Body of pancreas (tissue), 4 donors: ENCODE measurements at regions of chr1 and their contacts with region 1.

Region 1: DNA sequence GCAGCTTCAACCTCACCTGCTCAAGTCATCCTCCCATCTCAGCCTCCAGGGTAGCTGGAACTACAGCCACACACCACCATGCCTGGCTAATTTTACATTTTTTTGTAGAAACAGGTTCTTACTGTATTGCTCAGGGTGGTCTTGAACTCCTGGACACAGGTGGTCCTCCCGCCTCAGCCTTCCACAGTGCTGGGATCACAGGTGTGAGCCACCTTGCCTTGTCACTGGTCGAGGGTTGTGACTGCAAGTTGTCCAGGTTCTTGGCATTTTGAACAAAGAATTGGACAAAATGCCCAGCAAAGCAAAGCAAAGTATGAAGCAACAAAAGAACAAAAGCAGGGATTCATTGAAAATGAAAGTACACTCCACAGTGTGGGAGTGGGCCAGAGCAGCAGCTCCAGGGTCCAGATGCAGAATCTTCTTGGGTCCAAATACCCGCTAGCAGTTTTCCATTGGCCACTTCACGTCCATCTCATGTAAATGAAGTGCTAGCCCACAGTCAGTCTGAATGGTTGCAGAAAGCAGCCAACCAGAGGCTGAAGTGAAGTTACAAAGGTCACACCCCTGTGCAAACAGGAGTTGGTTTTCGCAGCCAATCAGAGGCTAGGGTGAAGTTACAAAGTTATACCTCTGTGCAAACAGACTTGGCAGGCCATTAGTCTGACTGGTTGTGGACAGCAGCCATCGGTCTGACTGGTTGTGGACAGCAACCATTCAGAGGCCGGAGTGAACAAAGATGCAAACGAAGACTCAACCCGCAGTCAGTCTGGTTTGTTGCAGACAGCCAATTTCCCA is 109.5 kb upstream of the KIF26B start:
- DNase-seq: peak; percentile 56 to 82 (median 64)
- ATAC-seq: peak; percentile 60
- H3K4me3 ChIP-seq: no peak overlapping the region
- H3K27ac ChIP-seq: peak overlapping the region; percentile 44 to 79 (median 68)
- H3K4me1 ChIP-seq: peaks cover 27% of the 10 kb centered on the region
- H3K27me3 ChIP-seq: no peaks in the 10 kb centered on the region
- CTCF ChIP-seq: no peak
- POLR2A ChIP-seq: no peak

Region 2: DNA sequence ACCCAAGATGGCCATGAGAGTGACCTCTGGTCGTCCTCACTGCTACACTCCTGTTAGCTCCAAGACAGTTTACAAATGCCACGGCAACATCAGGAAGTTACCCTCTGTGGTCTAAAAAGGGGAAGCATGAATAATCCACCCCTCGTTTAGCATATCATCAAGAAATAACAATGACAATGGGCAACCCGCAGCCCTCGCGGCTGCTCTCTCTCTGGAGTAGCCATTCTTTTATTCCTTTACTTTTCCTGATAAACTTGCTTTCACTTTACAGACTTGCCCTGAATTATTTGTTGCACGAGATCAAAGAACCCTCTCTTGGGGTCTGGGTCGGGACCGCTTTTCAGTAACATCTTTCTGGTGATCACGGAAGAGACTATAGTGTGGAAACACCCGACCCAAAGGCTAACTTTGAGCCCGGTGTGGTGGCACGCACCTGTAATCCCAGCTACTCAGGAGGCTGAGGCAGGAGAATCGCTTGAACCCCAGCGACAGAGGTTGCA is 229.6 kb before region 1 on chr1:
- intact Hi-C with region 1: loop called (anchors 10 kb)
- DNase-seq: peak in 1 of 4 donors; percentile 34
- ATAC-seq: no peak
- H3K4me3 ChIP-seq: no peak overlapping the region
- H3K27ac ChIP-seq: no peak overlapping the region
- H3K4me1 ChIP-seq: no peaks in the 10 kb centered on the region
- H3K27me3 ChIP-seq: no peaks in the 10 kb centered on the region
- CTCF ChIP-seq: no peak
- POLR2A ChIP-seq: no peak

Region 3: GRCh38 chr1:244881552-244882280 is 163.6 kb before region 1 on chr1:
- intact Hi-C with region 1: no loop called
- DNase-seq: no peak
- ATAC-seq: no peak
- H3K4me3 ChIP-seq: no peak overlapping the region
- H3K27ac ChIP-seq: no peak overlapping the region
- H3K4me1 ChIP-seq: no peaks in the 10 kb centered on the region
- H3K27me3 ChIP-seq: no peaks in the 10 kb centered on the region
- CTCF ChIP-seq: no peak
- POLR2A ChIP-seq: no peak

Region 4: GRCh38 chr1:244896550-244896949 is 148.7 kb before region 1 on chr1:
- intact Hi-C with region 1: no loop called
- DNase-seq: no peak
- ATAC-seq: no peak
- H3K4me3 ChIP-seq: no peak overlapping the region
- H3K27ac ChIP-seq: no peak overlapping the region
- H3K4me1 ChIP-seq: no peaks in the 10 kb centered on the region
- H3K27me3 ChIP-seq: no peaks in the 10 kb centered on the region
- CTCF ChIP-seq: no peak
- POLR2A ChIP-seq: no peak

Region 5: DNA sequence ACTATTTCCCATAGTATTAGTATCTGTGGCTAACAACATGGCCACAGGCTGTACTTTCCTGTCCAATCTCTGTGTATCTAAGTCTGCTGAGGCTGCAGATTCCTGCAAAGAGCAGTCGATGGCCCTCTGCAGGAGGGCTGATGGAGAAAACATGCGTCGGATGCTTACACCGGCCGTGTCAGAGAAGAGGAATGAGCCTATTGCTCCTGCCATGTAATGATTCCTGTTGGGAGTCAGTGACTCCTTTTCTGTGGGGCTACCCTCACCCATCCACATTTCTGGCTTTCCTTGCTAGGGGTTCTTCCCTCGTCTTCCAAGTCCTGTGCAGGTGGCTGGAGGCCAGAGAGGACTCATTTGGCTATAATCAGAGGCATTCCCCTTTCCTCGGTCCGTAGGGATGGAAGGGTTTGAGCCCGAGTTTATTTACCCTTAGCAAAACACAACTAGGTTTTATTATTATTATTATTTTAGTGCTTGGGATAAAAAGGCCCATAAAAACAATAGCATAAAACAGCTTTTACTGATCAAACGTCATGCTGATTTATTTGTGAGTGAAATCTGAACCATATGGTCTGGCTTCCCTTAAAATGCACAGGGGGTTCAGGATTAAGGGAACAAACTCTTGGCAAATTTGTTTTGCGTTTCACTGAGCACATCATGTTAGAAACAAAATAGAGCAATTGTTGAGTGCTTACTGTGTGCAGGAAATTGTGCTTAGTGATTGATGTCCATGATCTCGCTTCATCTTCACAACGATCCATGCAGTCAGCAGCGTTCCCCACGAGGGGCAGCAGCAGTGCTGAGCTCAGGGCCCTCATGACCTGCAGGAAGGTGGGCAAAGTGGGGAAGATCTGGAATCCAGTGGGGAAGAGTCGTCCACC is 180.3 kb after region 1 on chr1:
- intact Hi-C with region 1: no loop called
- DNase-seq: no peak
- ATAC-seq: no peak
- H3K4me3 ChIP-seq: no peak overlapping the region
- H3K27ac ChIP-seq: no peak overlapping the region
- H3K4me1 ChIP-seq: no peaks in the 10 kb centered on the region
- H3K27me3 ChIP-seq: no peaks in the 10 kb centered on the region
- CTCF ChIP-seq: no peak
- POLR2A ChIP-seq: no peak